Activated CD4-positive, alpha-beta memory T cell treated with anti-CD3 and anti-CD28 coated beads, Interleukin-2, amount 10 ng/mL, durations not matched to agents 7 days and 5 days (primary cell): ENCODE measurements at regions of chr6 and their contacts with region 1.

Region 1: GRCh38 chr6:72411872-72412708 is 209.8 kb upstream of the KCNQ5 start:
- DNase-seq: peak; percentile 82
- H3K4me3 Mint-ChIP-seq: no peak overlapping the region
- H3K27ac Mint-ChIP-seq: no peak overlapping the region
- H3K4me1 Mint-ChIP-seq: no peaks in the 10 kb centered on the region
- H3K27me3 Mint-ChIP-seq: peaks cover 7% of the 10 kb centered on the region

Region 2: GRCh38 chr6:72425003-72425681 is 13.1 kb after region 1 on chr6:
- CTCF ChIA-PET with region 1: interaction called, 15 read pairs
- POLR2A ChIA-PET with region 1: no interaction called
- DNase-seq: no peak
- H3K4me3 Mint-ChIP-seq: no peak overlapping the region
- H3K27ac Mint-ChIP-seq: no peak overlapping the region
- H3K4me1 Mint-ChIP-seq: no peaks in the 10 kb centered on the region
- H3K27me3 Mint-ChIP-seq: peaks cover 5% of the 10 kb centered on the region

Region 3: DNA sequence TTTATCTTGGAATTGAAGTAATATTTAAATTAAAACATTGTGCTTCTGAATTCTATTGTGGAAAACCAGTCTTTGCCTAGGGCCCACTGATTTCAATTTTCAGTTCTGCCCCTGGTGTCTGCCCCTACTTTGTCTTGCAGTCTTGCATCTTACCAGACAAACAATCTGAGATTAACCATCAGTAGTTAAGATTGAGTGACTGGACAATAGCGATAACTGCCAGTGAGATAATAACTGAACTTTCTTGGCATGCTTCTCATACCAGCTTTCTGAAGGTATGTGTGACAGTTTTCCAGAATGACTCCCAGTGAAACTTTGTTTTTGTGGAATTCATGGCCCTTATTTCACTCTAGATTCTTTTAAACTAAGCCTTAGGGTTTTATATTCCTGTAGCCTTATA is 263.3 kb after region 1 on chr6:
- CTCF ChIA-PET with region 1: no interaction called
- POLR2A ChIA-PET with region 1: no interaction called
- DNase-seq: no peak
- H3K4me3 Mint-ChIP-seq: no peak overlapping the region
- H3K27ac Mint-ChIP-seq: no peak overlapping the region
- H3K4me1 Mint-ChIP-seq: peaks cover 2% of the 10 kb centered on the region
- H3K27me3 Mint-ChIP-seq: no peaks in the 10 kb centered on the region

Region 4: GRCh38 chr6:73129653-73130443 is 717.8 kb after region 1 on chr6:
- CTCF ChIA-PET with region 1: interaction called, 48 read pairs
- POLR2A ChIA-PET with region 1: no interaction called
- DNase-seq: peak; percentile 81
- H3K4me3 Mint-ChIP-seq: peak overlapping the region; percentile 0
- H3K27ac Mint-ChIP-seq: no peak overlapping the region
- H3K4me1 Mint-ChIP-seq: peaks cover 4% of the 10 kb centered on the region
- H3K27me3 Mint-ChIP-seq: peaks cover 2% of the 10 kb centered on the region